Heart right ventricle (tissue), 16 donors: ENCODE measurements at regions of chrX and their contacts with region 1.

Region 1: DNA sequence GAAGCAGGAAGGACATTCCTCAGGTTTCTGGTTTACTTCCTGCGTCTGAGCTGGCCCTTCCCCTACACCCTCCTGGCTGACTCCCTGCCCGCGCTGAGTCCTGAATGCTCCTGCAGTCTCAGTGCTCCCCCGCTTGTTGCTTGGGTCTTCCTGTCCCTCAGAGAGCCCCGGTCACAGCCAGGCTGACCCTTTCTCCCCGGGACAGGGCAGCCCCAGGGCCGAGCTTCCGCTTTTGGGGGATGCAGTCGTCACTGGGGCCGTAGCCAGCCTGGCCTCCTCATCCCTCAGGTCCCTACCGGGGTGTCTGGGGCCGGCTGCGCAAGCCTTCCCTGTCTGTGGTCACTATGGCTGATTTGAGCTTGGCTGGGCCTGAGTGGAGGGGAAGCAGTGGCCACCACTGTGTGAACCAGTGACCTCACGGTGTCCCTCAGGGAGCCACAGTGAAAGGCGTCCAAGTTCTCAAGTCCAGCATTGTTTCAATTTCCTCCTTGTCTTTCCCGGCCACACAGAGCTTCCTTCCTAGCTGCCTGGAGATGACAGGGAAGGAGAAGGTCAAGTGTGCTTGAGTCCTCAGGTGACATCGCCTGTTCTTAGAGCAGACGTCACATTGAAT is 34.1 kb upstream of the ASMTL start:
- DNase-seq: peak; percentile 62 to 83
- ATAC-seq: peak; percentile 88 to 96 (median 93)
- H3K4me3 ChIP-seq: peak overlapping the region in 3 of 10 donors; percentile 5 to 34 (median 31)
- H3K27ac ChIP-seq: peak overlapping the region in 9 of 10 donors; percentile 73 to 89 (median 86)
- H3K4me1 ChIP-seq: peaks cover 0 to 36% (median 14%) of the 10 kb centered on the region in 9 donors
- H3K27me3 ChIP-seq: peaks cover 0 to 23% (median 3%) of the 10 kb centered on the region in 7 donors
- CTCF ChIP-seq: no peak

Region 2: GRCh38 chrX:1380672-1381233 is 106.1 kb before region 1 on chrX:
- intact Hi-C with region 1: no loop called
- DNase-seq: no peak
- ATAC-seq: peak in 3 of 8 donors; percentile 2 to 10 (median 8)
- H3K4me3 ChIP-seq: no peak overlapping the region
- H3K27ac ChIP-seq: no peak overlapping the region
- H3K4me1 ChIP-seq: peaks cover 0 to 7% (median 0%) of the 10 kb centered on the region in 9 donors
- H3K27me3 ChIP-seq: no peaks in the 10 kb centered on the region
- CTCF ChIP-seq: no peak

Region 3: GRCh38 chrX:1435241-1435895 is 51.5 kb before region 1 on chrX:
- intact Hi-C with region 1: no loop called
- DNase-seq: no peak
- ATAC-seq: peak in 3 of 8 donors; percentile 15 to 32 (median 25)
- H3K4me3 ChIP-seq: no peak overlapping the region
- H3K27ac ChIP-seq: no peak overlapping the region
- H3K4me1 ChIP-seq: no peaks in the 10 kb centered on the region
- H3K27me3 ChIP-seq: no peaks in the 10 kb centered on the region
- CTCF ChIP-seq: no peak

Region 4: GRCh38 chrX:1462596-1463251 is 24.1 kb before region 1 on chrX:
- intact Hi-C with region 1: loop called in 1 of 10 experiments (anchors 2 kb)
- DNase-seq: peak in 1 of 2 donors; percentile 66
- ATAC-seq: peak; percentile 80 to 93 (median 92)
- H3K4me3 ChIP-seq: peak overlapping the region in 1 of 10 donors; percentile 10
- H3K27ac ChIP-seq: peak overlapping the region; percentile 61 to 88 (median 78)
- H3K4me1 ChIP-seq: peaks cover 0 to 32% (median 7%) of the 10 kb centered on the region in 9 donors
- H3K27me3 ChIP-seq: peaks cover 0 to 23% (median 12%) of the 10 kb centered on the region in 7 donors
- CTCF ChIP-seq: no peak